IMR-90 (cell line): ENCODE measurements at regions of chr1 and their contacts with region 1.

Region 1: GRCh38 chr1:15323351-15323988 is 76.4 kb downstream of the FHAD1 start:
- DNase-seq: peak; percentile 80
- ATAC-seq: peak; percentile 98
- H3K4me3 ChIP-seq: no peak overlapping the region
- H3K27ac ChIP-seq: no peak overlapping the region
- H3K4me1 ChIP-seq: no peaks in the 10 kb centered on the region; the same call in 1 of the 2 replicates
- H3K27me3 ChIP-seq: no peaks in the 10 kb centered on the region
- CTCF ChIP-seq: peak; percentile 93
- POLR2A ChIP-seq: no peak
- RAD21 ChIP-seq: peak; percentile 93

Region 2: DNA sequence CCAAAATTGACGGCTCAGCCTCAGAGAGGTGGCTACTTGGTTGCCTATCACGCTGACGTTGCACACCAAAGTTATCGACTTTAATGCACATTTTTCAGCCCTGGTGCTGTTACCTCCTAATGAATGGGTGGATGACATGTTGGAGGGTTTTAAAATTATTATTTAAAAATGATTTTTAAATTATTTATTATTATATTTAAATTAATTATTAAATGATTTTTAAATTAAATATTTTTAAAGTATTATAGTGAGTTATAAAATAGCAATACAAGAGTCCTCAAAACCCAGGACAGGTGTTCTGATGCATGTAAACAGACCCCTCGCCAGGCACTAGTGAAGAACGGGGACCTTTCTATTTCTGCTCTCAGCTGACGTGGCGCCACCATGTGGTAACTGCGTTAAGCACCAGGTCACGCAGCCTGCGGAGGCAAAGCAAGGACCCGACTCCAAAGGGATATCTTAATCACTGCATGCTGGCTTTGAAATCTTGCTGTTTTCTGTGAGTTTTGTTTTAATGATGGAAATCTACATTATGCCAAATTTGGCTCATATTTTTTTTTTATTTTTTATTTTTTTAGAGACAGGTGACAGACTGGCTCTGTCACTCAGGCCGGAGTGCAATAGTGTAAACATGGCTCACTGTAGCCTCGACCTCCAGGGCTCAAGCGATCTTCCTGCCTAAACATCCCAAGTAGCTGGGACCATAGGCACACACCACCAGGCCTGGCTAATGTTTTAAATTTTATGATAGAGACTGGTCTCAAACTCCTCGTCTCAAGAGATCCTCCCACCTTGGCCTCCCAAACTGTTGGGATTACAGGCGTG is 177.9 kb after region 1 on chr1:
- CTCF ChIA-PET with region 1: no interaction called
- POLR2A ChIA-PET with region 1: no interaction called
- dilution Hi-C with region 1: no loop called
- in situ Hi-C with region 1: loop called (anchors 10 kb)
- intact Hi-C with region 1: loop called (anchors 1 kb)
- DNase-seq: peak; percentile 49
- ATAC-seq: peak; percentile 87
- H3K4me3 ChIP-seq: no peak overlapping the region
- H3K27ac ChIP-seq: no peak overlapping the region
- H3K4me1 ChIP-seq: no peaks in the 10 kb centered on the region
- H3K27me3 ChIP-seq: no peaks in the 10 kb centered on the region
- CTCF ChIP-seq: peak; percentile 67
- POLR2A ChIP-seq: no peak
- RAD21 ChIP-seq: peak; percentile 63

Region 3: DNA sequence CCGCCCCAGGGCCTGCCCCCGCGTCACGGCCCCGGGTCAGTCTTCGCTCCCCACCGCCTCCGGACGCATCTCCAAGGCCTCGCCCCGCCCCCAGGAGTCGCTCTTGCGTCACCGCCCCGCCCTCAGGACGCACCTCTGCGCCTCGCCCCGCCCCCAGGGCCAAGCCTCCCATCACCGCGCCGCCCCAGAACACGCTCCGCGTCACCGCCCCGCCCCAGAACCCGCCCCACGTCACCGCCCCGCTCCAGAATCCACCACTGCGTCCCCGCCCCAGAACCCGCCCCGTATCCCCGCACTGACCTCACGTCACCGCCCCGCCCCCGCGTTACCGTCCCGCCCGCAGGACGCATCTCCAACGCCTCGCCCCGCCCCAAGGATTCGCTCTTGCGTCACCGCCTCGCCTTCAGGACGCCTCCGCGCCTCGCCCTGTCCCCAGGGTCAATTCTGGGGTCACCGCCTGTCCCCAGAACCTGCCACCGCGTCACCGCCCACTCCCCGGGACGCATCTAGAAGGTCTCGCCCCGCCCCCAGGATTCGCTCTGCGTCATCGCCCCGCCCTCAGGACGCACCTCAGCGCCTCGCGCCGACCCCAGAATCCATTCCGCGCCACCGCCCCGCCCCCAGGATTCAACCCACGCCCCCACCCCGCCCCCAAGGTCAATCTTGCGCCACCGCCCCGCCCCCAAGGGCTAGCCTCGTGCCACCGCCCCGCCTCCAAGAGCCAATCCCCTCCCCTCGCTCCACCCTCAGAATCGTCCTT is 201.0 kb after region 1 on chr1:
- CTCF ChIA-PET with region 1: no interaction called
- POLR2A ChIA-PET with region 1: no interaction called
- dilution Hi-C with region 1: no loop called
- in situ Hi-C with region 1: no loop called
- intact Hi-C with region 1: loop called (anchors 5 kb)
- DNase-seq: peak; percentile 98
- ATAC-seq: peak; percentile 73
- H3K4me3 ChIP-seq: peak overlapping the region; percentile 97
- H3K27ac ChIP-seq: peak overlapping the region; percentile 100
- H3K4me1 ChIP-seq: peaks cover 2% of the 10 kb centered on the region
- H3K27me3 ChIP-seq: no peaks in the 10 kb centered on the region
- CTCF ChIP-seq: no peak
- POLR2A ChIP-seq: no peak
- RAD21 ChIP-seq: no peak